Posterior vena cava (tissue), 2 donors: ENCODE measurements at regions of chr1 and their contacts with region 1.

Region 1: GRCh38 chr1:192477630-192478029 is 97.9 kb upstream of the RGS1 start:
- DNase-seq: no peak

Region 2: DNA sequence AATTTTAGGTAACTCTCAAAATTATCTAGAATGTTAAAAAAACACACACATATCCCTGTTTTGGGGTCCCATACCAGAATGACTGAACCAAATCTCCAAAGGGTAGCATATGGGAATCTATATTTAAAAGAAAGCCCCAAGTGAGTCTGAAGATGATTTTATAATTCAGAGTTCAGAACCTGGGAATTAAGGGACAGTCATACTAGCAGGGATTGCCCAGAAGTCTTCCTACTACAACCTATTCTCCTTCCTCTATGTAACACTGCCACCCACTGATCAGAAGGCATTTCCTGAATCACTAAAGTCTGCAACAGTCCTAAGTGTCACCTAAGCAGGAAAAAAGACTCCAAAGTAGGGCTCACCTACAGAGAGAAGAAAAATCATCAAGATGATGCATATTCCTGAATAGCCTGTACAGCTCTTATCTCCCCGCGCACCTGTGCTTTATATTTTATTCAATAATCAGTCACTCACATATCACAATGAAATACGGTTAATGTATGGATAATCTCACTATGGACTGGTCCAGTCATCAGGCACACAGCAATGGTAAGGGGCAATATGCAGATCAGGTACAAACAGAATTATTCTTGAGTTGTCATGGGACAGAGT is 102.8 kb after region 1 on chr1:
- intact Hi-C with region 1: loop called in 1 of 2 experiments (anchors 10 kb)
- DNase-seq: no peak

Region 3: DNA sequence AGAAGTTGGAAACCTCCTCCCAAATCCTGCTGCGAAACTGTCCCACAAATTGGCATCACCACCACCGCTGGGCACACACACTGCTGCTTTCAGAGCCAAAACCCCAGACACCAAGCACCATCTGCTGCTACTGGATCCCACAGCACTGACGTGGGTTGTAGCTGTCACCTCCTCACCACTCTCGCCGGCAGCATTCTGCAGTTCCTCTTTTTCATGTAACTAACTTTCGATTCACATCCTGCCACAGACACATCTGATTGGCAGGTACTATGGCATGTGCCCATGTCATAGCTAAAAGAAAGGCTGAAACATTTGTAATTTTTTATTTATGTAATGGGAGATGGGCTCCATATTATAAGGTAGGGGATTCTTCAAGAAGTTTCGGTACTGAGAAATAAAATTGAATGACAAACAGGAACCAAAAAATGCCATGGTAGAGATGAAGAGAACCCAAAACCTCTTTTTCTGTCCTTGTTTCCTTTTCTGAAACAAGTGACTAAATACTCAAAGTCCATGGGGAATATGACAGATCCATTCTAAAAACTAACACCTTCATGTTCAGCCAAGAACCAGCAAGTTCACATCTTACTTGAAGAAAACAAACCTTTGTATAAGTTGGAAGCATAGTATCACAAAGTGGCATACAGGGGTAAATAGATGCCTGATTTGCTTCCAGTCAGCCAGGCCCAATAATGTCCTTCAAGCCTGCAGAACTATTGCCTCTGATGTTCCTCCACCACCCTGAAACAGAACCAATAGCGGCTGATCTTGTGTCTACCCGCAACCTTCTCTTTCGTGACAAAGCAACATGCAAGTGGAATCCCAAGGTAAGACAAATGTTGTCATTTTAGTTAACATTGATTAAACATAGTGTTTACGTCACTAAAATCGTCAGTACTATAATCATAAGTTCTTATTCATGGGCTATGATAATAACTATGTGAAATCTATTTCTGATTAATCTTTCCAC is 131.8 kb after region 1 on chr1:
- intact Hi-C with region 1: loop called in 1 of 2 experiments (anchors 10 kb)
- DNase-seq: peak; percentile 90

Region 4: DNA sequence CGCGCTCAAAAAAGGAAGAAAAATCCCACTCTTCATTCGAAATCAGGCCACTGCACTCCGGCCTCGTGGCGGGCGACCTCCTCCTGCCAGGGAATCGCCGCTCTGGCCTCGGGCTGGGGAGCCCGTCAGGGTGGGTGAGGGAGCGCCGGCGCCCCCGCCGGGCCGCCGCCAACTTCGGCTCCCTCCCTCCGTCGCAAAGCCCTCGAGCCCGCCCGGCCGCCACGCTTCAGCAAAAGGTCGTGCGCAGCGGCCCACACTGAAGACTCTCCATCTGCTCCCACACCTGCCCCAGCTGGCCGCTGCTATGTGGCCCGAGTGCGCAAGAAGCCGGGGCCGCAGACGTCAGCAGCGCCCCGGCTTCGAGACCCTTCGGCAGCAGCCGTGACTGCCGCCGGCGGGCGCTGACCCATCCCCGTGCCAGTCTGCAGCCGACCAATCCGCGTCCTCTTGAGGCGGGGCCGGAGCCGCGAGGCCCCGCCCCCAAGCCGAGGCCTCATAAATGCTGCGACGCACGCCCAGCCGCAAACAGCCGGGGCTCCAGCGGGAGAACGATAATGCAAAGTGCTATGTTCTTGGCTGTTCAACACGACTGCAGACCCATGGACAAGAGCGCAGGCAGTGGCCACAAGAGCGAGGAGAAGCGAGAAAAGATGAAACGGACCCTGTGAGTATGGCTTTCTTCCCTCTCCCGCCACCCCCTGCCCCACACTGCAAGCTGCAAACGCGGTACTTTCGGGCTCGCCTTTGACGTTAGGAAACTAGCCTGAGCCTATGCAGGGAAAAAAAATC is 331.1 kb after region 1 on chr1 and contains the start of gene RGS2:
- intact Hi-C with region 1: loop called in 1 of 2 experiments (anchors 10 kb)
- DNase-seq: peak; percentile 97
- total RNA-seq, gene RGS2: 70.8 to 96.2 TPM

Region 5: GRCh38 chr1:193019442-193020026 is 541.9 kb after region 1 on chr1:
- intact Hi-C with region 1: loop called in 1 of 2 experiments (anchors 10 kb)
- DNase-seq: no peak

Region 6: GRCh38 chr1:193121616-193122593 is 644.3 kb after region 1 on chr1 and contains the start of gene CDC73:
- intact Hi-C with region 1: loop called in 1 of 2 experiments (anchors 10 kb)
- DNase-seq: peak; percentile 99
- total RNA-seq, gene CDC73: 70.0 to 79.1 TPM